ENCODE measurements at regions of chr10 and their contacts with region 1.

Region 1: DNA sequence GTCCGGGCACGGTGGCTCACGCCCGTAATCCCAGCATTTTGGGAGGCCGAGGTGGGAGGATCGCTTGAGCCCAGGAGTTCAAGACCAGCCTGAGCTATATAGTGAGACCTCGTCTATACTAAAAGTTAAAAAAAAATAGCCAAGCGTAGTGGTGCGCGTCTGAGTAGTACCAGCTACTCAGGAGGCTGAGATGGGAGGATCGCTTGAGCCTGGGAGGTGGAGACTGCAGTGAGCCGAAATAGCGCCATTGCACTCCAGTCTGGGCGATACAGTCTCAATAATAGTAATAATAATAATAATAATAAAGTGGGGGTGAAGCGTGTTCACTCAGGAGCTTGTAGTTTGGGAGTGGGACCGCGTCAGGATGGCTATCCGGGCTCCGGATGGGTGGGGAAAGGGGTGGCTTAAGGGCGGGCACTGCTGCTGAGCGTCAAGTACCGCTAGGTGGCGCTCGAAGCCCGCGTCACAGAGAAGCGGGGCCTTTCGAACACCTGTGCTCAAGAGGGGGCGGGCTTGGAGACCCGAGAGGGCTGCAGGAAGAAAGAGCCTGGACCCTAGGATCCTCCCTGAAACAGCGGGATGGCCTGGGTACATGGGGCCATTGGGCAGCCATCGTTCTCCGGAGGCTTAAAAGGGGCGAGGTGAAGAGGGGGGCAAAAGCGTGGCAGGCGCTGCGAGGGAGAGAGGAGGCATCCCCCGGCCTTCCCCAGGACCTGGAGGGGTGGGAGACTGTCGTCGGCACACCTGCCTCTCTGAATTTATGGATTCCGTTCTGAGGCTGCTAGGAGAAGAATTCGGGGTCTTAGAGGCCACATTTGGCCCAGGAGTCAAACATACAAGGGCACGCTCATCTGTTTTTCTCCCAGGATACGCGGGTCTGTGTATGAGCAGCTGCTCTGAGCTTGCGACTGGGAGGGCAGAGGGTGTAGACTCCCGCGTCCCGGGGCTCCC is 14.5 kb downstream of the LBX1 start:
- DNase-seq: peak in 7 of 10 donors; percentile 56 to 93 (median 62)

Region 2: DNA sequence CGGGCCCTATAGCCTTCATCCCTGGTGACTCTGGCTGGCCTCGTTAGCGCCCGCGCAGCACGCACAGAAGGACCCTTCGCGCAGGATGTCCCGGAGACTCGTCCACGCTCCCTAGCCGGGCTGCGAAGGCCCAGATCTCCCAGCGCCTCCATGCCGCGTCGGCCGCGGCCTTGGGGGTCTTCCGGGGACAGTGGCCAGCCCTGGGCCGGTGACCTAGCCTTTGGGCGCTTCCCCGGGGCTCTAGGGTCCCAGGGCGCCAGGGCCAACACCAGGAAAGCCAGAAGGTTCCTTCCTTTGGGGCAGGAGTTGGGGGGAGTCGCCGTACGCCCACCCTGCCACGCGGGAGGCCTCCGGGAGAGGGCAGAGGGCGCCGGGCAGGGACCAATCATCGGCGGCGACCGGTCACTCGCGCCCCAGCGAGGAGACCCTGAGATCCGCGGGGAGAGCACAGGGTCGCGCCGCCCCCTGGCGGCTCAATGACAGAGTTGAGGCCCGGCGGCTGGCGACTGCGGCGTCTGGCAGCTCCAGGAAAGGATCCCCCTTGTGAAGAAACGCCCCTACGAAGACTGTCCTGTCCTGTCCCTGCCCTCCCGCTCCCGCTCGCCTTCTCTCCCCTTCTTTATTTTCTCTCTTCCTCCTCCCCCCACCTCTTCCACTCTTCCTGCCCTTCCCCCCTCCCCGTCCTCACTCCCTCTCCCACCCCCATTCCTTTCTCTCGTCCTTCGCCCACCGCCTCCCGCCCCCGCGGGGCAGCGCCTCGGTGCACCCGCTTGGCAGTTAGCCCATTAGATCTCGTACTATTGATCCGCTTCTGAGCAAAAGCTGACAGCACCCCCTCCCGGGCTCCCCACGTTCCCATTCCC is 76.8 kb after region 1 on chr10:
- intact Hi-C with region 1: loop called (anchors 2 kb)
- DNase-seq: peak; percentile 44 to 93 (median 70)

Region 3: GRCh38 chr10:101569838-101570766 is 355.4 kb after region 1 on chr10:
- intact Hi-C with region 1: loop called (anchors 2 kb)
- DNase-seq: peak; percentile 62 to 97 (median 80)

Region 4: DNA sequence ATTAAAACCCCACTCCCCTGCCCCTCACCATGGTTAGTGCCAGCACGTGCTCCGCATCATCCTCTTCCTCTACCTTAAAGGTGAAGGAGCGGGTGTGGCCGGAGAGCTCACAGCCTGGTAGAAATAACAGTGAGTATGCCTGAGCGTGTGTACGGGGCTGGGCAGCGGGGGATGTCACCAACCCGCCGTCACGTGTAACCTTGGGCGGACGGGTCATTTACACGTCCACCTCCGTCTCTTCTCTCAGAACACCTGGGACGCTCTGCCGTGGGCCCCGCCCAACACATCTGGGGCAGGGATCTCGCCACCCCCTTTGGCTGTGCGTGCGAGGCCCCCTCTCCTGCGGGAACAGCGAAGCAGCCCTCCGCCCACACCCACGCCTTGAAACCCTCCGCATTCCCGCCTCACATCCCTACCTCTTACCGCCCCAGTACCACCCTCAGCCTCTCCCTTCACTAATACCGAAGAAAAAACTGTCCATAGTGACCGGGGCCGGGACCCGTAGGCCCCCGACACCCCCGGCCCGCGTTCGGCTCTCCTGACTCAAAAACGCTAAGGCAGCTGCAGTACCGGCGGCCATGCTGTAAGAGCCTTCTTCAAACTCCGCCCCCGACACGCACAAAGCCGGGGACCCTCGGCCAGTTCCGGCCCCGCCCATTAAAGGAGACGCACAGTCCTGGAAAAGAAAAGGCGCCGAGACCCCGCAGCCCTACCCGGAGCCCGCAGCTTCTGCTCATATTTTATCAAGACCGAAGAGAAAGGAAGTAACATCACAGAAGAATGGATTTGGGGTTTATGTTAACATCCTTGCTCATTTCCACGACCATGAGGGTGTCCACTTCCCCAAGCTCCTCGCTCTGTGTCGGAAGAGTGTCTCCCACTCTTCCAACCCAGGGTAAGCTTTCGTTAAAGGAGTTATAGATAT is 568.4 kb after region 1 on chr10 and contains the start of gene NPM3:
- intact Hi-C with region 1: loop called (anchors 10 kb)
- DNase-seq: peak; percentile 67 to 98 (median 87)